B cell (primary cell): ENCODE measurements at regions of chr10 and their contacts with region 1.

Region 1: GRCh38 chr10:131885391-131886161 is 15.2 kb upstream of the PPP2R2D start:
- DNase-seq: peak; percentile 80
- ATAC-seq: peak; percentile 99
- H3K4me3 ChIP-seq: no peak overlapping the region
- H3K4me3 Mint-ChIP-seq: no peak overlapping the region
- H3K27ac ChIP-seq: no peak overlapping the region
- H3K27ac Mint-ChIP-seq: no peak overlapping the region
- H3K4me1 ChIP-seq: peaks cover 3 to 7% of the 10 kb centered on the region in 2 donors
- H3K4me1 Mint-ChIP-seq: peaks cover 3% of the 10 kb centered on the region
- H3K27me3 ChIP-seq: peaks cover 0 to 28% (median 0%) of the 10 kb centered on the region in 4 experiments
- H3K27me3 Mint-ChIP-seq: peaks cover 12% of the 10 kb centered on the region
- CTCF ChIP-seq: peak; percentile 92

Region 2: GRCh38 chr10:131831561-131831960 is 54.0 kb before region 1 on chr10:
- CTCF ChIA-PET with region 1: no interaction called
- POLR2A ChIA-PET with region 1: no interaction called
- intact Hi-C with region 1: no loop called
- DNase-seq: no peak
- ATAC-seq: no peak
- H3K4me3 ChIP-seq: no peak overlapping the region
- H3K4me3 Mint-ChIP-seq: no peak overlapping the region
- H3K27ac ChIP-seq: no peak overlapping the region
- H3K27ac Mint-ChIP-seq: no peak overlapping the region
- H3K4me1 ChIP-seq: no peaks in the 10 kb centered on the region
- H3K4me1 Mint-ChIP-seq: no peaks in the 10 kb centered on the region
- H3K27me3 ChIP-seq: no peaks in the 10 kb centered on the region
- H3K27me3 Mint-ChIP-seq: peaks cover 4% of the 10 kb centered on the region
- CTCF ChIP-seq: no peak

Region 3: DNA sequence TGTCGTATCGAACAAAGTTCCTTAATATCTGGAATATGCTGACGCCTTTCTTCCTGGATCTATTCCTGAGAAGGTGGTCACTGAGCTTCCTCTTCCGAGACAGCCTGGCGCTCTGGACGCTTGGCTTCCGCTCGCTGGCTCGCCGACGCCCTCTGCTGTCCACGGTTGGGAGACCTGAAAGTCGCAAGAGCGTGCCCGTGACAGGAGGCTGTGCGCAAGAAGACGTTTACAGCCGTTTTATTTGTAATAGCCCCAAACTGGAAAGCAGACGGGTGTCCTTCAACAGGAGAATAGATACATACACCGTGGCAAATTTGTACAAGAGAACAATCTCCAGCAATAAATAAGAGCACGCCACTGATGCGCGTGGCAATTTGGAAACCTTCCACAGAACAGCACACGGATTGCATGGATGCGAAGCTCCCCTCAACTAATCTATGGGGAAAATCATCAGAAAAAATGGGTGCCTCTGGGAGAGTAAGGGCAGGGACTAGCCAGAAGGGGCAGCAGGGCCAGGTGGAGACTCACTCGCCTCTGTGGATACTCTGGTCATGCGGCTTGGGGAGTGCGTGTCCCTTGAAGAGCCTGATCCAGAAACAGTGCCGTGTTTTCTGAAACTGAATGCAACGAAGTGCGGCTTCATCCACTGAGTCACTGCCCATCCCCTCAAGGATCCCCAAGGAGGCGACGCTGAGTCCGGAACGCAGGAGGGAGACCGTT is 137.7 kb after region 1 on chr10:
- CTCF ChIA-PET with region 1: interaction called, 106 read pairs
- POLR2A ChIA-PET with region 1: no interaction called
- intact Hi-C with region 1: no loop called
- DNase-seq: peak; percentile 72
- ATAC-seq: peak; percentile 69
- H3K4me3 ChIP-seq: no peak overlapping the region
- H3K4me3 Mint-ChIP-seq: peak overlapping the region; percentile 14
- H3K27ac ChIP-seq: no peak overlapping the region
- H3K27ac Mint-ChIP-seq: no peak overlapping the region
- H3K4me1 ChIP-seq: peaks cover 0 to 7% of the 10 kb centered on the region in 2 donors
- H3K4me1 Mint-ChIP-seq: peaks cover 5% of the 10 kb centered on the region
- H3K27me3 ChIP-seq: peaks cover 0 to 7% (median 3%) of the 10 kb centered on the region in 4 experiments
- H3K27me3 Mint-ChIP-seq: peaks cover 34% of the 10 kb centered on the region
- CTCF ChIP-seq: peak; percentile 82

Region 4: DNA sequence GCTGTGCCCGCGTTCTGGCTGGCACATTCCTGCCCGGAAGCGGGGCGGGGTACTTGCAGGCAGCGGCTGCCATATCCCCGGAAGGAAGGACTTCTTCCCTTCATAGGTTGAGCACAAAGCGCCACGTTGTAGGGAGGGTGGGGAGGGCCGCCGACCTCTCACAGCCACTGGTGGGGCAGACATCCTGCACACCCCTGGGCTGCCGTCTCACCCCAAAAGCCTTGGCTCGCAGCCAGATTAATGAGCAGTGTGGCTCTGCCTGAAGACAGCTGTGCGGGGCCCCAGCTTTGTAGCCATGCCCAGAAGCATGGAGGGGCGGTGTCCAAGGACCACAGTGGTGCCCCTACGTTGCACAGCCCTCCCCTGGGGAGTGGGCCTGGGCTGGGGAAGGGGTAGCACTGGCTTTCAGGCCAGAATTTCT is 246.9 kb after region 1 on chr10:
- CTCF ChIA-PET with region 1: no interaction called
- POLR2A ChIA-PET with region 1: no interaction called
- intact Hi-C with region 1: no loop called
- DNase-seq: no peak
- ATAC-seq: no peak
- H3K4me3 ChIP-seq: no peak overlapping the region
- H3K4me3 Mint-ChIP-seq: no peak overlapping the region
- H3K27ac ChIP-seq: no peak overlapping the region
- H3K27ac Mint-ChIP-seq: no peak overlapping the region
- H3K4me1 ChIP-seq: no peaks in the 10 kb centered on the region
- H3K4me1 Mint-ChIP-seq: no peaks in the 10 kb centered on the region
- H3K27me3 ChIP-seq: peaks cover 0 to 8% (median 0%) of the 10 kb centered on the region in 4 experiments
- H3K27me3 Mint-ChIP-seq: peaks cover 14% of the 10 kb centered on the region
- CTCF ChIP-seq: no peak

Region 5: DNA sequence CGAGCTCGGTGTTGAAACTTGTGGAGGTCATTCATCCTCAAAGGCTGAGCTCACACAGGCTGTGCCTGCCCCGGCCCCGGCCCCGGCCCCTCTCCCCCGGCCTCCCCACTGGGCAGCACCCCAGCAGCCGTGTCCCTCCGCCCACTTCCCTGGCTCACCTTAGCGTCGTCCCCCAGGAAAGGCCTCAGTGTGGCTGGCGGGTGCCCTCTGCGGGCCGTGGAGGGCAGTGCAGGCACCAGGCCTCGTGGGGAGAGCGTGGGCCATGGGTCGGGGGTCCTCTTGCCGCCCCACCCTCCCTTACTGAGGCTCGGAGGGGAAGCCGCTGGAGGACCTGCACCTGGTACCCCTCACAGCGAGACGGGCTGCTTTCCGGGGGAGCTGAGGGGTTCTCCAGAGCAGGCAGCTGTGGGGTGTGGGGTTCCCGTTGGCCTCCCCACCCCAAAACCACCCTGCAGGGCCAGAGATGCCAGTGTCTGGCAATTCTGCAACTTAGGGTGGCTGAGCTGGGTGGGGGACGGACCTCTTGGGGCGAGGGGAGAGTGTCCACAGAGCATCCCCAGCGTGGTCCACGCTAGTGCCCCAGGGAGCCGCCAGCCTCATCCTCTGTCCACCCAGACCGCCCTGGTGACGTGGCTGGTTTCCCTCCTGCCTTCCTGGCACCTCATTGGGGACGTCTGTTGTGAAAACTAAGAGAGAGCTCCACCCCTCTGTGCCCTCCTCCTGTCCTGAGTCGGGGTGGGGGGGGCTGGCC is 257.0 kb after region 1 on chr10:
- CTCF ChIA-PET with region 1: interaction called, 16 read pairs
- POLR2A ChIA-PET with region 1: no interaction called
- intact Hi-C with region 1: no loop called
- DNase-seq: peak; percentile 47
- ATAC-seq: peak; percentile 73
- H3K4me3 ChIP-seq: no peak overlapping the region
- H3K4me3 Mint-ChIP-seq: no peak overlapping the region
- H3K27ac ChIP-seq: no peak overlapping the region
- H3K27ac Mint-ChIP-seq: no peak overlapping the region
- H3K4me1 ChIP-seq: peaks cover 0 to 2% of the 10 kb centered on the region in 2 donors
- H3K4me1 Mint-ChIP-seq: no peaks in the 10 kb centered on the region
- H3K27me3 ChIP-seq: peaks cover 0 to 10% (median 0%) of the 10 kb centered on the region in 4 experiments
- H3K27me3 Mint-ChIP-seq: peaks cover 3% of the 10 kb centered on the region
- CTCF ChIP-seq: peak; percentile 87